GM12878 (cell line): ENCODE measurements at regions of chrX and their contacts with region 1.

Region 1: GRCh38 chrX:9995855-9996339 is 28.7 kb downstream of the CLDN34 start:
- DNase-seq: no peak
- ATAC-seq: peak; percentile 60
- H3K4me3 ChIP-seq: no peak overlapping the region
- H3K27ac ChIP-seq: no peak overlapping the region
- H3K4me1 ChIP-seq: peaks cover 9% of the 10 kb centered on the region
- H3K27me3 ChIP-seq: no peaks in the 10 kb centered on the region
- CTCF ChIP-seq: peak; percentile 94 to 99 (median 96)
- EP300 ChIP-seq: no peak
- POLR2A ChIP-seq: no peak
- RAD21 ChIP-seq: peak; percentile 98

Region 2: DNA sequence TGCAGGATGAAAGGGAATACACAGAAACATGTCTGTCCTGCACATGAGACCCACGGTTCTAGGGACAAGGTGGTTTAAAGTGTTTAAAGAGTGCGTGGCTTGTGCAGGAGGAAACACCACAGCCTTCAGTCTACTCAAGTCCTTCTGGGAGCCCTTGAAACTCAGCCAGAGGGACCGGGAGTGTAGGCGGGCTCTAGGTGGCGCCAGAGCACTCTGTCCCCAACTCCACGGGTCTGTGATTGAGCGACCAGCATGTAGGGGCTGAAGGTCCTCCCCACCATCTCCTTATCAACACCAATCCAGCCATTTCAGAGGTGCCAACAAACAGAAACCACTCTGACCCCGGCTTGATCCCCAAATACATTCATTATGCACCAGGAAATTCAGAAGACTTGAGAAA is 110.7 kb before region 1 on chrX:
- CTCF ChIA-PET with region 1: interaction called, 11 read pairs
- POLR2A ChIA-PET with region 1: no interaction called
- RAD21 ChIA-PET with region 1: interaction called, 4 read pairs
- SMC1A ChIA-PET with region 1: interaction called, 5 read pairs
- in situ Hi-C with region 1: no loop called
- intact Hi-C with region 1: loop called (anchors 1 kb)
- DNase-seq: no peak
- ATAC-seq: peak; percentile 99
- H3K4me3 ChIP-seq: no peak overlapping the region
- H3K27ac ChIP-seq: no peak overlapping the region
- H3K4me1 ChIP-seq: no peaks in the 10 kb centered on the region
- H3K27me3 ChIP-seq: no peaks in the 10 kb centered on the region; a peak in 2 of 4 replicates
- CTCF ChIP-seq: peak; percentile 79 to 90 (median 85); a peak in 5 of 6 replicates
- EP300 ChIP-seq: no peak
- POLR2A ChIP-seq: no peak
- RAD21 ChIP-seq: peak; percentile 79

Region 3: GRCh38 chrX:10014462-10015356 is 18.8 kb after region 1 on chrX:
- CTCF ChIA-PET with region 1: interaction called, 30 read pairs
- POLR2A ChIA-PET with region 1: interaction called, 26 read pairs
- RAD21 ChIA-PET with region 1: interaction called, 53 read pairs
- SMC1A ChIA-PET with region 1: interaction called, 54 read pairs
- in situ Hi-C with region 1: no loop called
- intact Hi-C with region 1: loop called (anchors 2 kb)
- DNase-seq: no peak
- ATAC-seq: peak; percentile 66
- H3K4me3 ChIP-seq: peak overlapping the region; percentile 58; the same call in 1 of the 2 replicates
- H3K27ac ChIP-seq: peak overlapping the region; percentile 33; the same call in 1 of the 2 replicates
- H3K4me1 ChIP-seq: peaks cover 9% of the 10 kb centered on the region
- H3K27me3 ChIP-seq: no peaks in the 10 kb centered on the region
- CTCF ChIP-seq: no peak
- EP300 ChIP-seq: no peak
- POLR2A ChIP-seq: peak; percentile 48; the same call in 1 of the 2 replicates
- RAD21 ChIP-seq: no peak

Region 4: DNA sequence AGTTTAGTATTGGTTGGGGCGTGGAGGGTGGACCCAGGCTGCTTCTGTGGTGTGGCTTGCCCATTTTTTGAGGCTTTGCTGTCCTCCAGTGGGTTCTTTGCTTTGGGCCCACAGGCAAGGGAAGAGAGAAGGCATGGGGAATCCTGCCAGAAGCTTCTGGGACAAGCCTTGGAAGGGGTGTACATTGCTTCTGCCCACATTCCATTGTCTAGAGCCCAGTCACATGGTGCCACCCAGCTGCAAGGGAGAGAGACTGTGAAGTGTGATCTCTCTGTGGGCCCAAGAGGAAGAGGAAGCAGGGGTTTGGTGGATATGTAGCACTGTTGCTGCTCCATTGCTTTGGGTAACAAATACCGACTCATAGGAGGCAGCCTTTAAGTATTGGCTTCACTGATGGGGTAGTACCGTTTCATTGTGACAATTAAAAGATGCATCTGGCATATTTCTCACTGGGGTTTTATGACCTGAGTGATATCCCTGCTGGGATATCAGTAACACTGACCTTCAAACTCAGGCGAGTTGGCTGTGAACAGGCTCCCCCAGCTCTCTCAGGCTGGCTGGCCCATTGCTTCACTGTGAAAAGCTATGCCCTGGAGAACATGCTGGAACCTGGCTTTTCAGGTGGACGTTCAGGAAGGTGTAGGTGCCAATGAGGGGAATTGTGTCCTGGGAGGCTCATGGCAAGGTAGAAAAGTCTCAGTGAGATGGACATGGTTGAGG is 57.2 kb after region 1 on chrX:
- CTCF ChIA-PET with region 1: interaction called, 8 read pairs
- POLR2A ChIA-PET with region 1: interaction called, 3 read pairs
- RAD21 ChIA-PET with region 1: interaction called, 26 read pairs
- SMC1A ChIA-PET with region 1: interaction called, 6 read pairs
- in situ Hi-C with region 1: no loop called
- intact Hi-C with region 1: no loop called
- DNase-seq: no peak
- ATAC-seq: peak; percentile 59
- H3K4me3 ChIP-seq: no peak overlapping the region
- H3K27ac ChIP-seq: no peak overlapping the region
- H3K4me1 ChIP-seq: no peaks in the 10 kb centered on the region
- H3K27me3 ChIP-seq: peaks cover 0 to 4% of the 10 kb centered on the region in 2 experiments; a peak in 1 of 4 replicates
- CTCF ChIP-seq: no peak
- EP300 ChIP-seq: no peak
- POLR2A ChIP-seq: no peak
- RAD21 ChIP-seq: no peak; the same call in 1 of the 2 replicates

Region 5: DNA sequence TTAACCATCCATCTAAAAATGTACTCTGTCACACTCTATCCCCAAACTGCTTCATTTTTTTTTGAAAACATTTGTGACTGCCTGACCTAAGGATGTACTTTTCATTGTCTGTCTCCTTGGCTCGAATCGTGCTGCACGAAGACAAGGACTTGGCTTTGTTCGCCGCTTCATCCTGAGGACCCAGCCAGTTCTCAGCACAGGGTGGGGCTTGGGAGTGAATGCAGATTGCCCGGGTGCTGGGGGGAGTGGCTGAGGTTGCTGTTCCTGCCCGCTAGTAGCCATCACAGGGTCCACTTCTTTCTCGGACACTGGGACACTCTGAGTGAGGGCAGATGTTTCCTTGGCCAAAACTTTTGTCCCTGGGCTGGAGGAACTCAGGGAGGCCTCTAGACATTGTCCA is 90.8 kb after region 1 on chrX:
- CTCF ChIA-PET with region 1: interaction called, 32 read pairs
- POLR2A ChIA-PET with region 1: interaction called, 8 read pairs
- RAD21 ChIA-PET with region 1: interaction called, 74 read pairs
- SMC1A ChIA-PET with region 1: interaction called, 42 read pairs
- in situ Hi-C with region 1: no loop called
- intact Hi-C with region 1: loop called (anchors 1 kb)
- DNase-seq: no peak
- ATAC-seq: no peak
- H3K4me3 ChIP-seq: no peak overlapping the region
- H3K27ac ChIP-seq: no peak overlapping the region
- H3K4me1 ChIP-seq: peaks cover 21% of the 10 kb centered on the region
- H3K27me3 ChIP-seq: no peaks in the 10 kb centered on the region
- CTCF ChIP-seq: no peak
- EP300 ChIP-seq: no peak
- POLR2A ChIP-seq: no peak
- RAD21 ChIP-seq: no peak

Region 6: GRCh38 chrX:10111364-10112148 is 115.7 kb after region 1 on chrX:
- CTCF ChIA-PET with region 1: interaction called, 412 read pairs
- POLR2A ChIA-PET with region 1: interaction called, 42 read pairs
- RAD21 ChIA-PET with region 1: interaction called, 424 read pairs
- SMC1A ChIA-PET with region 1: interaction called, 281 read pairs
- in situ Hi-C with region 1: loop called (anchors 5 kb)
- intact Hi-C with region 1: no loop called
- DNase-seq: peak; percentile 59
- ATAC-seq: peak; percentile 69
- H3K4me3 ChIP-seq: peak overlapping the region; percentile 18; the same call in 1 of the 2 replicates
- H3K27ac ChIP-seq: peak overlapping the region; percentile 87
- H3K4me1 ChIP-seq: peaks cover 47% of the 10 kb centered on the region
- H3K27me3 ChIP-seq: no peaks in the 10 kb centered on the region; a peak in 1 of 4 replicates
- CTCF ChIP-seq: no peak
- EP300 ChIP-seq: peak; percentile 46 to 63; a peak in 3 of 4 replicates
- POLR2A ChIP-seq: peak; percentile 60
- RAD21 ChIP-seq: no peak

Region 7: DNA sequence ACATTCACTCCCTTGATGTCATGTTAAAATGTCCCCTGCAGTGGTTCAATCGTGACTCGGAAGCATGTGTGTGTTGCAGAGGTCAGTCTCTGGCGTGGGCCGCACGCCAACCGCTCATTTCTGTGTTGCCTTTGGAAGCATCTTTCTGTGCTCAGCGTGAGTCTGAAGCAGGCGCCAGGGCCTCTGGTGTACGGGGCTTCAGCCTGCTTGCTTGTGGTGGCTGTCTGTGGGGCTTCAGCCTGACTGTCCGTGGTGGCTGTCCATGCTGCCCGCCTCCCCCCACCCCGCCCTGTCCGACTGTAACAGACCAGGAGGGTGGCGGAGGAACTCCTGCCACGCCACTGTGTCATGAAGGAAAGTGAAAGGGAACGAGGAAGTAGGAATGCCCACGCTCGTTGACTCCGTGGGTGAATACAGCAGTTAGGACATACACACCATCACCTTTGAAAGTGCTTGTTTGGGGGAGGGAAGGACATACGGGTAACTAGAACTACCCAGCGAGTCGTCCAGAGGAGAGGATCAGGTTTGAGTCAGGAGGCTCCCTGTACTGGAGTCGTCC is 146.2 kb after region 1 on chrX:
- CTCF ChIA-PET with region 1: no interaction called
- POLR2A ChIA-PET with region 1: no interaction called
- RAD21 ChIA-PET with region 1: no interaction called
- SMC1A ChIA-PET with region 1: no interaction called
- in situ Hi-C with region 1: no loop called
- intact Hi-C with region 1: no loop called
- DNase-seq: no peak
- ATAC-seq: no peak
- H3K4me3 ChIP-seq: no peak overlapping the region
- H3K27ac ChIP-seq: no peak overlapping the region
- H3K4me1 ChIP-seq: no peaks in the 10 kb centered on the region
- H3K27me3 ChIP-seq: no peaks in the 10 kb centered on the region
- CTCF ChIP-seq: no peak
- EP300 ChIP-seq: no peak
- POLR2A ChIP-seq: no peak
- RAD21 ChIP-seq: no peak

Region 8: GRCh38 chrX:10615931-10616775 is 620.3 kb after region 1 on chrX:
- CTCF ChIA-PET with region 1: no interaction called
- POLR2A ChIA-PET with region 1: no interaction called
- RAD21 ChIA-PET with region 1: no interaction called
- SMC1A ChIA-PET with region 1: no interaction called
- in situ Hi-C with region 1: loop called (anchors 25 kb)
- intact Hi-C with region 1: no loop called
- DNase-seq: no peak
- ATAC-seq: peak; percentile 83
- H3K4me3 ChIP-seq: no peak overlapping the region
- H3K27ac ChIP-seq: no peak overlapping the region
- H3K4me1 ChIP-seq: no peaks in the 10 kb centered on the region
- H3K27me3 ChIP-seq: peaks cover 0 to 5% of the 10 kb centered on the region in 2 experiments
- CTCF ChIP-seq: peak; percentile 57 to 64 (median 60); a peak in 5 of 6 replicates
- EP300 ChIP-seq: no peak
- POLR2A ChIP-seq: no peak
- RAD21 ChIP-seq: peak; percentile 51